Mammary epithelial cell (primary cell): ENCODE measurements at regions of chr20 and their contacts with region 1.

Region 1: DNA sequence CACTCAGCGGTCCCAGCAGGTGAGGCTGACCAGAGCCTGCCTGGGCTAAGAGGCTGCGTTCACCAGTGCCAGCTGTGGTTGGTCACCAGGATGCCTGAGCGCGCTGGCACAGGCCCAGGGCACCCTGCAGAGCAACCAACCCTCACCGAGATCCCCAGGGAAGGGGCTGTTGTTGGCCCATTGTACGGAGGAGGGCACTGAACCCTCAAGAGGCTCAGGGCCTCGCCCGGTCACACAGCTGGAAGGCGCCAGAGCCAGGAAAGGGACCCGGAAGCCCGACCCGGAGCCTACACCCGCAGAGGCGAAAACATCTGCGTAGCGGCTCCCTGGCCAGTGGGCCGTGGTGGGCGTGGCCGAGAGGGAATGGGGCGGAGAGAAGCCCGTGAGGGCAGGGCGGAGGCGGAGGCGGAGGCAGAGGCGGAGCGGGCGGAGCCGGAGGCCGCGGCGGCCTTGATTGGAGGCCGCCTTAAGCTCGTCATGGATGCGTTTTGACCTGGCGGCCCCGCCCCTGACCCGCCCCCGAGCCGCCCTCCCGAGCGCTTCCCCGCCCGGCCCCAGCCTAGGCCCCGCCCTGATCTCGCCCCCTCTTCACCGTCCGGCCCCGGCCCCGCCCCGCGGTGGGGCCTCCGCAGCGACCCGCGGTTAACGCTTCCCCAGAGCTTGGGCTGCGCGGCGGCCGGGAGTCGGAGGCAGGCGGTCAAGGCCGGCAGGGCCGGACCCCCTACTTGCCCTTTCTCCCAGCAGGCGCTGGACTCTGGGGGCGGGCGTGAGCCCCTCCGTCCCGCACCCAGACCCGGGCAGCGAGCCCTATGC is 2.2 kb upstream of the MRGBP start:
- DNase-seq: peak; percentile 94
- H3K4me3 ChIP-seq: peak overlapping the region; percentile 46 to 66 (median 51)
- H3K27ac ChIP-seq: peak overlapping the region; percentile 61
- H3K4me1 ChIP-seq: peaks cover 44% of the 10 kb centered on the region
- H3K27me3 ChIP-seq: no peaks in the 10 kb centered on the region
- CTCF ChIP-seq: no peak

Region 2: GRCh38 chr20:62500237-62500864 is 293.8 kb before region 1 on chr20:
- CTCF ChIA-PET with region 1: no interaction called
- dilution Hi-C with region 1: no loop called
- in situ Hi-C with region 1: no loop called
- intact Hi-C with region 1: loop called (anchors 1 kb)
- DNase-seq: peak; percentile 29
- H3K4me3 ChIP-seq: no peak overlapping the region
- H3K27ac ChIP-seq: no peak overlapping the region
- H3K4me1 ChIP-seq: peaks cover 9% of the 10 kb centered on the region
- H3K27me3 ChIP-seq: no peaks in the 10 kb centered on the region
- CTCF ChIP-seq: peak; percentile 56 to 86

Region 3: GRCh38 chr20:62616728-62617621 is 177.1 kb before region 1 on chr20:
- CTCF ChIA-PET with region 1: no interaction called
- dilution Hi-C with region 1: no loop called
- in situ Hi-C with region 1: no loop called
- intact Hi-C with region 1: loop called (anchors 2 kb)
- DNase-seq: peak; percentile 26
- H3K4me3 ChIP-seq: no peak overlapping the region
- H3K27ac ChIP-seq: no peak overlapping the region
- H3K4me1 ChIP-seq: no peaks in the 10 kb centered on the region
- H3K27me3 ChIP-seq: no peaks in the 10 kb centered on the region
- CTCF ChIP-seq: peak; percentile 84 to 99

Region 4: DNA sequence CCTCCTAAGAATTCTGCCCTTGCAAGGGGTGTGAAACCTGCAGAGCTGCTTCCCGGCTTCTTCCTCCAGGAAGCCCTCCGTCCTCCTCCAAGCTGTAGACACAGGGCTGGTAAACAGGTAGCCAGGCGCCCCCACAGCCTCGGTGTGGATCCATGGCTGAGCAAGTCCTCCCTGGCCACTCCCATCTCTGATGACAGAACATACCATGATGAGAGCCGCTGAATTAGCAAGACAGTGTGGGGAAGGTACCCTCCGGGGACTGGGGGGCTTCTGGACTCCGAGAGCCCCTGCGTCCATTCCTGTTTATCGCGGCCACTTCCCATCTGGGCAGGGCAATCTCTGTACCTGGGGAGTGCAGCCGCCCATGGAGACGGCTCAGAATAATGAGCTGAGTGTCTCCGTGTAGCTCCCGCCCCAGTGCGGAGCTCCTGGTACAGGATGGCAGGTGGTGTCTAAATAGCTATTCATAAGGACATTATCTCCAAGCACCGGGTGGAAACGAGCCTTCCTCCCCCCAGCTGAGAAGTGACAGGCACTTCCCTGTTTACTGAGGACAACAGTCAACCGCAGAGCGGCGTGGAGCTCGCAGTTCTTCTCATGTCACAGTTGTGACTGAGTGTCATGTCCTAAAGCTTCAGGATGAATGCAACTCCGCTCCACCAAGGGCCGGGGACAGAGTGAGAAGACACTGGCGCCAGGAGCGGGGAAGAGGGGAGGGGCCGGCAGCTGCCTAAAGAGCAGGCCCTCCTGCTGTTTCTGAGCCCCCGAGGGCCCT is 108.2 kb before region 1 on chr20:
- CTCF ChIA-PET with region 1: interaction called, 3 read pairs
- dilution Hi-C with region 1: no loop called
- in situ Hi-C with region 1: loop called in 1 of 2 experiments (anchors 25 kb)
- intact Hi-C with region 1: loop called (anchors 1 kb)
- DNase-seq: no peak
- H3K4me3 ChIP-seq: no peak overlapping the region
- H3K27ac ChIP-seq: no peak overlapping the region
- H3K4me1 ChIP-seq: peaks cover 11% of the 10 kb centered on the region
- H3K27me3 ChIP-seq: no peaks in the 10 kb centered on the region
- CTCF ChIP-seq: no peak

Region 5: GRCh38 chr20:62782149-62782892 is 11.8 kb before region 1 on chr20:
- CTCF ChIA-PET with region 1: no interaction called
- dilution Hi-C with region 1: no loop called
- in situ Hi-C with region 1: no loop called
- intact Hi-C with region 1: no loop called
- DNase-seq: no peak
- H3K4me3 ChIP-seq: no peak overlapping the region
- H3K27ac ChIP-seq: no peak overlapping the region
- H3K4me1 ChIP-seq: no peaks in the 10 kb centered on the region
- H3K27me3 ChIP-seq: no peaks in the 10 kb centered on the region
- CTCF ChIP-seq: no peak

Region 6: GRCh38 chr20:62837800-62838454 is 43.8 kb after region 1 on chr20:
- CTCF ChIA-PET with region 1: no interaction called
- dilution Hi-C with region 1: no loop called
- in situ Hi-C with region 1: no loop called
- intact Hi-C with region 1: no loop called
- DNase-seq: no peak
- H3K4me3 ChIP-seq: no peak overlapping the region
- H3K27ac ChIP-seq: no peak overlapping the region
- H3K4me1 ChIP-seq: no peaks in the 10 kb centered on the region
- H3K27me3 ChIP-seq: no peaks in the 10 kb centered on the region
- CTCF ChIP-seq: no peak

Region 7: GRCh38 chr20:62850333-62850974 is 56.3 kb after region 1 on chr20:
- CTCF ChIA-PET with region 1: no interaction called
- dilution Hi-C with region 1: loop called (anchors 10 kb)
- in situ Hi-C with region 1: no loop called
- intact Hi-C with region 1: no loop called
- DNase-seq: no peak
- H3K4me3 ChIP-seq: no peak overlapping the region
- H3K27ac ChIP-seq: no peak overlapping the region
- H3K4me1 ChIP-seq: no peaks in the 10 kb centered on the region
- H3K27me3 ChIP-seq: no peaks in the 10 kb centered on the region
- CTCF ChIP-seq: no peak